Spleen (tissue), 13 donors: ENCODE measurements at regions of chr3 and their contacts with region 1.

Region 1: DNA sequence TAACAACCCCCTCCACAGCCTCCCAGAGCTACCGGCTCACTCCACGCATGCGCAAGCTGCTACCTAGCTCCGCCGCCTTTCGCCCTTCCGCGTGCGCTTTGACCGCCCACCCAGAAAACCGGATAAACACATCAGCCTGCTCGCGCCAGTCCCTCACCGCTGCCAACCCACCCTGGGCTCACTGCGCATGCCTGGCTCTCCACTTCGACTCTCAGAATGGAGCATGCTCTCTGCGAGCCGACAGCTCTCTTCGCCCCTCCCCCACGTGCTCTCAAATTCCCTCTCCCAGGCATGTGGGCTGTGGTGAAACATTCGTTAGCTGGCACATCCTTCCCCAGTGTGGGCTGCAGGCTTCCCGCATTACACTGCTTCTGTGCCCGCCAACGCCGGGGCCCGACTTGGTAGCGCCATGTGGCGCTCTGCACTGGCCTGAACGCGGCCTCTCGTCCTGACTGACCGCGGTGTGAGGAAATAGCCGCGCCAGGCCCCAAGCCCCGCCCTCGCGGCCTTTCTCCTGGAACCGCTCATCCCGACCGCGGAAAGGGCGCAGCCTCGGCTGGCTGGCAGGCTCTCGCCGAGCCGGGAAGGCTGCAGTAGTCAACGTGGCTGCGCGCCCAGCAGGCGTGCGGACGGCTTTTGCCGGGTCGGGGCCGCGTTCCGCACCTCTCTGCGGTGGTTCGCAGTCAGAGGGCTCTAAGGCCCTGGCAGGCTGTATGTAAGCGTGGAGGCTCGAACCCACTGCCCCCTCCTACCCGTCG is 445 bp upstream of the MSL2 start:
- DNase-seq: peak; percentile 99
- H3K4me3 ChIP-seq: peak overlapping the region; percentile 90 to 97 (median 94)
- H3K27ac ChIP-seq: peak overlapping the region; percentile 98 to 100 (median 100)
- H3K4me1 ChIP-seq: peaks cover 23 to 47% (median 30%) of the 10 kb centered on the region in 6 donors
- H3K27me3 ChIP-seq: no peaks in the 10 kb centered on the region
- CTCF ChIP-seq: peak in 2 of 11 experiments; percentile 2 to 9
- POLR2A ChIP-seq: peak in 2 of 3 donors; percentile 39 to 54

Region 2: DNA sequence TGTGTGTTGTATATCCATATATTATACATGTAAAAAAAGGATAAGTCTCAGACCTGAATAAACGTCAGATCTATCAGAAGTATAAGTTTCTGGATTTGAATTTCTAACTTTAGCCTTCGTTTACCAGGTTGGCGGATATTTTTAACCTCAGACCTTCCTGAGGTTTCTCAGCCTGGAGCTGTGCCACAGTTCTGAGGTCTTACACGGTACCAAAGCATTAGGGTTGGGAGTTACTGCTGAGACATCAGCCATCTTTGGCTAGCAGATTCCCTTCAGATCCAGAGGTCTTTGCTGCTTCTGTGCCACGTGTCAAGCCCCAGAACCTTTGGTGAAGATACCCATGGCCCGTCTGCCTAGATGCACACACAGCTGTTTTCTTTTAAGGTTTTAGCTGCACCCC is 146.3 kb before region 1 on chr3:
- intact Hi-C with region 1: no loop called
- DNase-seq: no peak
- H3K4me3 ChIP-seq: no peak overlapping the region
- H3K27ac ChIP-seq: no peak overlapping the region
- H3K4me1 ChIP-seq: no peaks in the 10 kb centered on the region
- H3K27me3 ChIP-seq: no peaks in the 10 kb centered on the region
- CTCF ChIP-seq: no peak
- POLR2A ChIP-seq: no peak

Region 3: DNA sequence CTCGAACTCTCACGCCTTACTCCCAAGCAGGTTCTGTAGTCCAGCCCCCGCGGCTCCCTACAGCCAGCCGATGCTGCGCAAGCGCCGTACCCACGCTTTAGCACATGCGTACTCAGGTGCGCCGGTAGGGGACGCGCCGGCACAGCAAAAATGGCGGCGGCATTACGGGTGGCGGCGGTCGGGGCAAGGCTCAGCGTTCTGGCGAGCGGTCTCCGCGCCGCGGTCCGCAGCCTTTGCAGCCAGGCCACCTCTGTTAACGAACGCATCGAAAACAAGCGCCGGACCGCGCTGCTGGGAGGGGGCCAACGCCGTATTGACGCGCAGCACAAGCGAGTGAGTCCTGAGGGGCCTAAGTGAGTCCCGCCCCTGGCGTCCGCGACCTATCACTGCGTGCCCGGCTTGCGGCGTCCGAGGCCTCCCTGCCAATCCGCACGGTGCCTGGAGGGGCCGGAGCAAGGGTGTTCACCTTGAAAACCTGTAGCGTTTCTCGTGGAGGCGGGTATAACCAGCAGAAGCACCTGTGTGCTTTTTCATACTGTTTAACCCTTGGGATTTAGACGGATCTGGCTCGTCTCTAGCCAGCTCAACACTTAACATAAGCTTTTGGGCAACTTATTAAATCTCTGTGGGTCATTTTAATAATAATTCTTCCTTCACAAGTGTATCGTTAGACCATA is 53.8 kb after region 1 on chr3 and contains the start of gene PCCB:
- intact Hi-C with region 1: loop called (anchors 10 kb)
- DNase-seq: peak; percentile 99
- H3K4me3 ChIP-seq: peak within 1 kb of the TSS; percentile 60 to 95 (median 72)
- H3K27ac ChIP-seq: peak within 1 kb of the TSS; percentile 87 to 95 (median 90)
- H3K4me1 ChIP-seq: peaks cover 9 to 23% (median 20%) of the 10 kb centered on the region in 6 donors
- H3K27me3 ChIP-seq: no peaks in the 10 kb centered on the region
- CTCF ChIP-seq: peak; percentile 70 to 96 (median 89)
- POLR2A ChIP-seq: no peak
- total RNA-seq, gene PCCB: 17.3 to 24.7 (median 21.0) TPM

Region 4: DNA sequence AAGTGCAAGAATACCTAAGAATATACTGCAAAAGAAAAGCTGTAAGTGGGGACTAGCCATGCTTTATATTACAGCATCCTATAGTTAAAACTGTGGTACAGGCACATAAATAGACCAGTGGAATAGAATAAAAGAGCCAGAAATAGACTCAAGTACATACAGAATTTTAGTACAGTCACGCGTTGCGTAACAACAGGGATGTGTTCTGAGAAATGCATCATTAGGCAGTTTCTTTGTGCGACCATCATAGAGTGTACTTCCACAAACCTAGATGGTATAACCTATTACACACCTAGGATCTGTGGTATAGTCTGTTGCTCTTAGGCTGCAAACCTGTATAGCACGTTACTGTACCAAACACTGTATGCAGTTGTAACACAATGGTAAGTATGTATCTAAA is 115.4 kb after region 1 on chr3:
- intact Hi-C with region 1: no loop called
- DNase-seq: no peak
- H3K4me3 ChIP-seq: no peak overlapping the region
- H3K27ac ChIP-seq: no peak overlapping the region
- H3K4me1 ChIP-seq: no peaks in the 10 kb centered on the region
- H3K27me3 ChIP-seq: no peaks in the 10 kb centered on the region
- CTCF ChIP-seq: no peak
- POLR2A ChIP-seq: no peak